CD8-positive, alpha-beta T cell (primary cell): ENCODE measurements at regions of chr3 and their contacts with region 1.

Region 1: GRCh38 chr3:170689893-170690660 is 104.2 kb upstream of the SLC7A14 start:
- DNase-seq: peak in 8 of 9 experiments; percentile 17 to 59 (median 28)
- ATAC-seq: no peak
- H3K4me3 ChIP-seq: no peak overlapping the region
- H3K4me3 Mint-ChIP-seq: no peak overlapping the region
- H3K27ac ChIP-seq: no peak overlapping the region
- H3K27ac Mint-ChIP-seq: no peak overlapping the region
- H3K4me1 ChIP-seq: no peaks in the 10 kb centered on the region
- H3K4me1 Mint-ChIP-seq: no peaks in the 10 kb centered on the region
- H3K27me3 ChIP-seq: no peaks in the 10 kb centered on the region
- H3K27me3 Mint-ChIP-seq: no peaks in the 10 kb centered on the region
- CTCF ChIP-seq: peak; percentile 34

Region 2: DNA sequence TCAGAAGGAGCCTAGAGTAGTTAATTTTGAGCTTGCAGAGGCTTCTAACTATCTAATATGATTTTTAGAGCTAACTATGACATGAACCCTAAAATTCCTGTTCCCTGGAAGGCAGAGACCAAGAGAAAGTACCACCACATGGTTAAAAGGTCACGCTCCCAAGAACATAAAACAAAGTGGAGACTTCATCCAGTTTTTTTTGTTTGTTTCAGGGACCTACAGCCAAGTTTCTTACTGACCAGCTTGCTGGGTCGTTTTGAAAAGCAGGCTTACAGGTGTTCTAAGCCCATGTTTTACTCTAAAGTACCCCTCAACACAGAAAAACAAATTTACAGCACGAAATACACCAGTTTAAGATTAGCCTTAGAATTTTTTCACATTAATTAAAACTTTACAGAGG is 372.1 kb before region 1 on chr3:
- CTCF ChIA-PET with region 1: no interaction called
- POLR2A ChIA-PET with region 1: no interaction called
- intact Hi-C with region 1: loop called in 1 of 2 experiments (anchors 10 kb)
- DNase-seq: no peak
- ATAC-seq: no peak
- H3K4me3 ChIP-seq: no peak overlapping the region
- H3K4me3 Mint-ChIP-seq: no peak overlapping the region
- H3K27ac ChIP-seq: no peak overlapping the region
- H3K27ac Mint-ChIP-seq: no peak overlapping the region
- H3K4me1 ChIP-seq: no peaks in the 10 kb centered on the region
- H3K4me1 Mint-ChIP-seq: no peaks in the 10 kb centered on the region
- H3K27me3 ChIP-seq: no peaks in the 10 kb centered on the region
- H3K27me3 Mint-ChIP-seq: peaks cover 4% of the 10 kb centered on the region
- CTCF ChIP-seq: no peak